Heart right ventricle (tissue), 16 donors: ENCODE measurements at regions of chr6 and their contacts with region 1.

Region 1: DNA sequence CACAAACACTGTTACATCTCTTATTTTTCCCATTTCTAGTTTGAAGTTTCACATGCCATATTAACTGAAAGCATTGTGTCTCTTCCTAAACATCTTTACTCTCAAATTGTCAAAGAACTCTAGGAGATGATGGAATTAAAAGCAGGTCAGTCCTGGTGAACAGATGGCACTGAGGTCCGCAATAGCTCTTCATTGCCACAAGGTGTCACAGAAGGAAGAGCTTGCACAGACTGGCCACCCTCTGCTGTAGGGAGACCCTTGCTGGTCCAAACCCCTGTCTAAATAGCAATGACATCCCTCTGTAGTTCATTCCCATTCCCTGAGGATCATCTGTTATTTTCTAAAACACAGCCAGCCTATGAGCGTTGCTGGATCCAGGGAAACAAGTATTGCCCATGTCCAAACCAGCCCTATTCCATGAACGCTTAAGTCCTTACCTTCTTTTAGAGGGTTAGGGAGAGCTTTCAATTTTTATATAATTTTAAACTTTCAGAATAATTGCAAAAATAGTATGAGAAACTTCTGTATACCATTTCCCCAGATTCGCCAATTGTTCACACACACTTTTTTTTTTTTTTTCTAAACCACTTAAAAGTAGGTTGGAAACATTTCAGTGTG is 10.1 kb upstream of the HDAC2 start:
- DNase-seq: no peak
- ATAC-seq: peak in 2 of 8 donors; percentile 42 to 63
- H3K4me3 ChIP-seq: no peak overlapping the region
- H3K27ac ChIP-seq: no peak overlapping the region
- H3K4me1 ChIP-seq: peaks cover 0 to 5% (median 0%) of the 10 kb centered on the region in 9 donors
- H3K27me3 ChIP-seq: no peaks in the 10 kb centered on the region
- CTCF ChIP-seq: peak in 7 of 9 donors; percentile 33 to 57 (median 50)

Region 2: GRCh38 chr6:113511100-113511499 is 469.9 kb before region 1 on chr6:
- intact Hi-C with region 1: no loop called
- DNase-seq: no peak
- ATAC-seq: no peak
- H3K4me3 ChIP-seq: no peak overlapping the region
- H3K27ac ChIP-seq: no peak overlapping the region
- H3K4me1 ChIP-seq: no peaks in the 10 kb centered on the region
- H3K27me3 ChIP-seq: no peaks in the 10 kb centered on the region
- CTCF ChIP-seq: no peak

Region 3: DNA sequence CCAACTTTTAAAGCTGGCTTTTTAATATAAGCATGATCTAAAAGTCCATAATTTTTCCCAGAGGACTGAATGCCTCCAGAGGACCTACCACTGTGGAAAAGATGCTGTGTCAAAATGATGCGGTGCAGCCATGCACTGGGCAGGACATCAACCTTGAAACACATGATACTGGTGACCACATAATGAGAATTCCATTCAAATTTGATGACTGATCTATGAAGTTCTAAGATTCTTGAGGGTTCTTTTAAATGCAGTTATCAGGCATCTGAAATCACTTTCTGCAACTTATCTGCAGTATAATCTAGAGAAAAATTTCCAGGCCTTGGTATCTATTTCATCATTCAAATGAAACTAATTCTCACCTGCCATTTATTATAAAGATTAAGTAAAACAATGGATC is 138.9 kb before region 1 on chr6:
- intact Hi-C with region 1: no loop called
- DNase-seq: no peak
- ATAC-seq: no peak
- H3K4me3 ChIP-seq: no peak overlapping the region
- H3K27ac ChIP-seq: no peak overlapping the region
- H3K4me1 ChIP-seq: no peaks in the 10 kb centered on the region
- H3K27me3 ChIP-seq: no peaks in the 10 kb centered on the region
- CTCF ChIP-seq: no peak

Region 4: GRCh38 chr6:114055349-114055748 is 74.3 kb after region 1 on chr6:
- intact Hi-C with region 1: loop called in 1 of 10 experiments (anchors 10 kb)
- DNase-seq: no peak
- ATAC-seq: no peak
- H3K4me3 ChIP-seq: no peak overlapping the region
- H3K27ac ChIP-seq: no peak overlapping the region
- H3K4me1 ChIP-seq: no peaks in the 10 kb centered on the region
- H3K27me3 ChIP-seq: no peaks in the 10 kb centered on the region
- CTCF ChIP-seq: no peak

Region 5: DNA sequence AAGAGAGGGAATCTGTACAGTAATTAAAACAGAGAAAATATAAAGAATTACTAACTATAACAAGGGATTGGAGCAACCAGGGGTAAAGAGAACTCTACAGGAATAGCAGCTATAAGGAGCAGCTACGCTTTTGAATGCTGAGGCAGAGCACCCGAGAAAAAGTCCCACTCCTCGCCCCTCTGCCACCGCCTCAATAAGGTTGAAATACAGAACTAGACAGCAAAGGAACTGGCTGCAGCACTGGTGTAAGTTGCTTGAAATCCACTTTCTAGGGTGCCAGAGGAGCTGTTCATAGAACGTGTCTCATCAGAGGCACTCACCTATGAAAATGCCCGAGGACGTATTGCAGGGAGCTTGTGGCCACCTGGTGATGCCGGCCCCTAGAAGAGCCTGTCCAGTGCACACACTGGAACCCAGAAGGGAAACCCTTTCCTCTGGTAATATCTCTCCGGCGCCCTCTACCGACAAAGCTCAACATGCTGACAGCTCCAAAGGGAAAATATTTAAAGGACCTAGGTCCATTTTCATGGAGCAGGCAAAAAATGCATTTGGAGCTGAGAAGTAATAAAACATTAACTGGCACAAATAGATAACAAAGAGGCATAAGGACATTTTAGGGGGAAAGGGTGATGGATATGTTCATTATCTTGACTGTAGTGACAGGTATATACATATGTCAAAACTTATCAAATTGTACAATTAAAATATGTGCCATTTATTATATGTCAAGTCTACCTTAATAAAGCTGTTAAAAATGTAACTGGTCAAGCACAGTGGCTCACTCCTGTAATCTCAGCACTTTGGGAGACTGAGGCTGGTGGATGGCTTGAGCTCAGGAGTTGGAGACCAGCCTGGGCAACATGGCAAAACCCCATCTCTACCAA is 127.3 kb after region 1 on chr6:
- intact Hi-C with region 1: loop called in 2 of 10 experiments (anchors 5 to 10 kb)
- DNase-seq: peak; percentile 48 to 49
- ATAC-seq: peak in 6 of 8 donors; percentile 25 to 74 (median 52)
- H3K4me3 ChIP-seq: no peak overlapping the region
- H3K27ac ChIP-seq: no peak overlapping the region
- H3K4me1 ChIP-seq: no peaks in the 10 kb centered on the region
- H3K27me3 ChIP-seq: peaks cover 0 to 3% (median 0%) of the 10 kb centered on the region in 7 donors
- CTCF ChIP-seq: peak; percentile 6 to 71 (median 66)